ENCODE measurements at regions of chr17 and their contacts with region 1.

Region 1: GRCh38 chr17:48928876-48929811 is 15.5 kb downstream of the SNF8 start:
- DNase-seq: no peak
- H3K4me3 ChIP-seq: no peak overlapping the region
- H3K27ac ChIP-seq: peak overlapping the region in 1 of 2 experiments; percentile 3; a peak in 1 of 4 replicates
- H3K4me1 ChIP-seq: no peaks in the 10 kb centered on the region
- H3K27me3 ChIP-seq: no peaks in the 10 kb centered on the region
- CTCF ChIP-seq: no peak
- EP300 ChIP-seq: no peak
- RAD21 ChIP-seq: no peak

Region 2: DNA sequence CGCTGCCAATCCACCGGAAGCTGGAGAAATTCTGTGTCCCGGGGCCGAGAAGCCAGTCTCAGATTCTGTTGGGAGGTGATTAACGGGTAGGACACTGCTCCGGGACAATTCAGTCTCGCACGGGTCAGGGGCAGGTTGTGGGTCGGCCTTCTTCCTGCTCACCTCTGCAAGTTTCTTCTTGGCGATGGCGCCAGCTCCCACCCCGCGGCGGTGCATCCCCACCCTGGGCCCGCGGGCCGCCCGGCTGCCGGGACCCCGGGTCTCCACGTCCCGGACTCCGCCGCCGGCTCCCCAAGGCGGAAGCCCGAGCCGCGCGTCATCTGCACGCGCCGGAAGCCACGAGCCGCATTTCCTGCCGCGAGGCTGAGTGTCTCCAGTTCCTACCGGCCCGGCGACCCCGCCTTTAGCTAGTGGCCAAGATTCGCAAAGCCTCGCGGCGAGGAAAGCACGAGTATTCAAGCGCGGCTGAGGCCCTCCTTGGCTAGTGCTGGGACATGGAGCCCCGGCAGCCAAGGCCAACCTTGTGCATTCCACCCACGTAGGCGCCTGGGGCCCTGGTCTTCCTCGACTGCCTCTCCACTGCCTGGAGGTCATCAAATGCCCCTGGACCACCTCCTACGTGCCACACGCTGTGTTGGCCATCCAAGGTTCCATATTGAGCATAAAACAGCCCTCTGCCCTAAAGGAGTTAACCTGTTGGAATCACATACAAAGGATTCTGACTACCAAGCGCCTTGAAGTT is 15.5 kb after region 1 on chr17 and contains the start of gene SNF8:
- CTCF ChIA-PET with region 1: no interaction called
- POLR2A ChIA-PET with region 1: interaction called, 11 read pairs
- DNase-seq: peak; percentile 99
- H3K4me3 ChIP-seq: peak within 1 kb of the TSS; percentile 64 to 85
- H3K27ac ChIP-seq: peak within 1 kb of the TSS; percentile 73 to 74
- H3K4me1 ChIP-seq: peaks cover 0 to 11% of the 10 kb centered on the region in 2 experiments; a peak in 1 of 4 replicates
- H3K27me3 ChIP-seq: no peaks in the 10 kb centered on the region
- CTCF ChIP-seq: no peak
- EP300 ChIP-seq: peak in 1 of 2 experiments; percentile 23; a peak in 1 of 4 replicates
- RAD21 ChIP-seq: no peak
- polyA plus RNA-seq, gene SNF8: 329 and 358 TPM in 2 replicates

Measured in SK-N-SH (cell line).